ENCODE measurements at regions of chr2 and their contacts with region 1.

Region 1: DNA sequence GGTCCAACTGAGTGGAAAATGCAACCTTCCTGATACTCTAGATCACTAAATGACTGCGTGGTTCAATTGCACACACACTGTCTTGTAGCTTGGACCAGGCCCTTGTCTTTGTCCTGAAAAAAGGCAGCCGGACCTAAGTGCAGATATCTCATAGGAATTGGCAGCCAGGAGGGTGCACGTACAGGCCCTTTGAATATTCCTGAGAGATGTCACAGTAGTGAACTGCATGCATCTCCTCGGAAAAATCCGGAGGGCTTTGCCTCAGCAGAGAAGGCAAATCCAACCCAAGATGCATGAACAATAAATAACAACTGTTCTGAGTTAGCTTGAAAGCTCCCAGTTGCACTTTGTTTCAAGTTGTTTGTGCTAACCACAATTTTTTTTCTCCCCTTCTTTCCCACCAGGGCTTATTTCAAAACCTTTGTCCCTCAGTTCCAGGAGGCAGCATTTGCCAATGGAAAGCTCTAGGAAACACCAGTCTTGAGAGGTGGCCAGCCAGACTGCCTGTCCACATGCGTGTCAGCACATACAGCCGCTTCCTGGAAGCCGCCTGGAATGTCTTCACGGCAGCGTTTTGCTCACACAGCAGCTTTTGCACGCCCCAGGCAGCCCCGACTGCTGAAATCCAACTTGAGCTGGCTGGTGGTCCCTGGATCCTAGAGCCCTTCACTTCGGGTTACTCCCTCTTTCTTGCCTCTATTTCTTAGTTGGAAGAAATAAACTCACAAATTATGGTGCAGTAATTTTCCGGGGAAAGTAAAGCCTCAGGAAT is 54.4 kb upstream of the FOSL2 start:
- DNase-seq: peak; percentile 64 to 80 (median 72)
- H3K4me3 ChIP-seq: no peak overlapping the region
- H3K27ac ChIP-seq: peak overlapping the region; percentile 30 to 44
- H3K4me1 ChIP-seq: peaks cover 21% of the 10 kb centered on the region
- H3K27me3 ChIP-seq: no peaks in the 10 kb centered on the region
- CTCF ChIP-seq: no peak
- EP300 ChIP-seq: peak; percentile 54
- POLR2A ChIP-seq: no peak

Region 2: GRCh38 chr2:27723372-27724144 is 614.7 kb before region 1 on chr2:
- intact Hi-C with region 1: loop called in 1 of 4 experiments (anchors 5 kb)
- DNase-seq: peak; percentile 70 to 81 (median 75)
- H3K4me3 ChIP-seq: no peak overlapping the region
- H3K27ac ChIP-seq: peak overlapping the region; percentile 79 to 80
- H3K4me1 ChIP-seq: peaks cover 10% of the 10 kb centered on the region
- H3K27me3 ChIP-seq: peaks cover 2% of the 10 kb centered on the region
- CTCF ChIP-seq: peak; percentile 65 to 87 (median 84)
- EP300 ChIP-seq: no peak
- POLR2A ChIP-seq: no peak

Region 3: GRCh38 chr2:27954771-27955383 is 383.4 kb before region 1 on chr2:
- intact Hi-C with region 1: loop called in 1 of 4 experiments (anchors 5 kb)
- DNase-seq: peak in 2 of 5 donors; percentile 34 to 56
- H3K4me3 ChIP-seq: no peak overlapping the region
- H3K27ac ChIP-seq: peak overlapping the region in 1 of 2 donors; percentile 52
- H3K4me1 ChIP-seq: peaks cover 1% of the 10 kb centered on the region
- H3K27me3 ChIP-seq: no peaks in the 10 kb centered on the region
- CTCF ChIP-seq: peak in 2 of 3 donors; percentile 27 to 36
- EP300 ChIP-seq: no peak
- POLR2A ChIP-seq: no peak

Region 4: GRCh38 chr2:28263690-28264089 is 74.5 kb before region 1 on chr2:
- intact Hi-C with region 1: no loop called
- DNase-seq: no peak
- H3K4me3 ChIP-seq: no peak overlapping the region
- H3K27ac ChIP-seq: no peak overlapping the region
- H3K4me1 ChIP-seq: peaks cover 1% of the 10 kb centered on the region
- H3K27me3 ChIP-seq: no peaks in the 10 kb centered on the region
- CTCF ChIP-seq: no peak
- EP300 ChIP-seq: no peak
- POLR2A ChIP-seq: no peak

Region 5: GRCh38 chr2:28286678-28287077 is 51.6 kb before region 1 on chr2:
- intact Hi-C with region 1: loop called in 1 of 4 experiments (anchors 10 kb)
- DNase-seq: no peak
- H3K4me3 ChIP-seq: no peak overlapping the region
- H3K27ac ChIP-seq: no peak overlapping the region
- H3K4me1 ChIP-seq: peaks cover 7% of the 10 kb centered on the region
- H3K27me3 ChIP-seq: no peaks in the 10 kb centered on the region
- CTCF ChIP-seq: no peak
- EP300 ChIP-seq: no peak
- POLR2A ChIP-seq: no peak

Region 6: GRCh38 chr2:28300485-28301341 is 37.5 kb before region 1 on chr2:
- intact Hi-C with region 1: loop called in 1 of 4 experiments (anchors 1 kb)
- DNase-seq: no peak
- H3K4me3 ChIP-seq: no peak overlapping the region
- H3K27ac ChIP-seq: peak overlapping the region in 1 of 2 donors; percentile 72
- H3K4me1 ChIP-seq: peaks cover 1% of the 10 kb centered on the region
- H3K27me3 ChIP-seq: no peaks in the 10 kb centered on the region
- CTCF ChIP-seq: no peak
- EP300 ChIP-seq: no peak
- POLR2A ChIP-seq: no peak

Measured in ovary (tissue), 10 donors.